Activated CD4-positive, alpha-beta memory T cell treated with anti-CD3 and anti-CD28 coated beads for 36 hours (primary cell): ENCODE measurements at regions of chr11 and their contacts with region 1.

Region 1: GRCh38 chr11:13335319-13335718 is 57.7 kb downstream of the BMAL1 start:
- DNase-seq: peak; percentile 83
- H3K4me3 Mint-ChIP-seq: no peak overlapping the region
- H3K27ac Mint-ChIP-seq: no peak overlapping the region
- H3K4me1 Mint-ChIP-seq: peaks cover 77% of the 10 kb centered on the region
- H3K27me3 Mint-ChIP-seq: no peaks in the 10 kb centered on the region

Region 2: GRCh38 chr11:13183094-13183825 is 152.1 kb before region 1 on chr11:
- CTCF ChIA-PET with region 1: interaction called, 12 read pairs
- POLR2A ChIA-PET with region 1: no interaction called
- intact Hi-C with region 1: loop called (anchors 2 kb)
- DNase-seq: no peak
- H3K4me3 Mint-ChIP-seq: no peak overlapping the region
- H3K27ac Mint-ChIP-seq: no peak overlapping the region
- H3K4me1 Mint-ChIP-seq: peaks cover 7% of the 10 kb centered on the region
- H3K27me3 Mint-ChIP-seq: peaks cover 15% of the 10 kb centered on the region

Region 3: GRCh38 chr11:13249996-13250395 is 85.3 kb before region 1 on chr11:
- CTCF ChIA-PET with region 1: interaction called, 16 read pairs
- POLR2A ChIA-PET with region 1: no interaction called
- intact Hi-C with region 1: no loop called
- DNase-seq: no peak
- H3K4me3 Mint-ChIP-seq: no peak overlapping the region
- H3K27ac Mint-ChIP-seq: no peak overlapping the region
- H3K4me1 Mint-ChIP-seq: no peaks in the 10 kb centered on the region
- H3K27me3 Mint-ChIP-seq: peaks cover 6% of the 10 kb centered on the region

Region 4: GRCh38 chr11:13276832-13277767 is 58.2 kb before region 1 on chr11:
- CTCF ChIA-PET with region 1: interaction called, 52 read pairs
- POLR2A ChIA-PET with region 1: interaction called, 9 read pairs
- intact Hi-C with region 1: loop called (anchors 1 kb)
- DNase-seq: peak; percentile 98
- H3K4me3 Mint-ChIP-seq: peak overlapping the region; percentile 95
- H3K27ac Mint-ChIP-seq: peak overlapping the region; percentile 78
- H3K4me1 Mint-ChIP-seq: peaks cover 44% of the 10 kb centered on the region
- H3K27me3 Mint-ChIP-seq: peaks cover 7% of the 10 kb centered on the region

Region 5: DNA sequence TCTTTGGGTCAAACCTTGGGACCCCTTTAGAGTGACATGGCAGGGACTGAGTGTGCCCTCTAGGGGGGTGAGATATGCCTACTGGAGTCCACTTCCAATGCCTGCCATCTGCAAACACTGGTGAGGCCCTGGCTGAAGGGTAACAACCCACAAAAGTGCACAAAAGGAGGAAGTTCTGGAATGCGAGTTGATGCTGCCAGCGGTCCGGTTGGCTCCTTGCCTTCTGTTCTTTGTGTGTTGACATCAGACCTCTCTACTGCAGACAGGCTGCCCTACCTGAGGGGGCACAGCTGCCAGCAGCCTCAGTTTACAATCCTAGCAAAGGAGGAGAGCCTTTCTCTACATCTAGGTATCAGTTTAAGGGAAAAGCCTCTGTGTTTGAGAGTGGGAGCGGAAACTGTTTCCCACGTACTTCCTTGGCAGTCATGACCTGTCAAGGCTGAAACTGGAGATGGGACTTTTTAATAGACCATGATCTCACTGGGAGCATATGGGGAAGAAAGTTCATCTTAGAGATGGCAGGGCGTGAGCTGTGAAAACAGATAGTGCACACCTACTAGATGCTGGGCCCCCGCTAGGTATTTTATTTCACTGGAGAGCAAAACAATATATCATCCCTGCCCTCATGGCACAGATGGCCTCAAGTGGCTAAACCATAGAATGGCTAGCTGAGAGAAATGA is 30.5 kb before region 1 on chr11:
- CTCF ChIA-PET with region 1: interaction called, 17 read pairs
- POLR2A ChIA-PET with region 1: no interaction called
- intact Hi-C with region 1: no loop called
- DNase-seq: no peak
- H3K4me3 Mint-ChIP-seq: no peak overlapping the region
- H3K27ac Mint-ChIP-seq: no peak overlapping the region
- H3K4me1 Mint-ChIP-seq: peaks cover 20% of the 10 kb centered on the region
- H3K27me3 Mint-ChIP-seq: no peaks in the 10 kb centered on the region

Region 6: GRCh38 chr11:13668102-13668956 is 333.0 kb after region 1 on chr11 and contains the start of gene FAR1:
- CTCF ChIA-PET with region 1: no interaction called
- POLR2A ChIA-PET with region 1: no interaction called
- intact Hi-C with region 1: loop called (anchors 5 kb)
- DNase-seq: peak; percentile 98
- H3K4me3 Mint-ChIP-seq: peak within 1 kb of the TSS; percentile 93
- H3K27ac Mint-ChIP-seq: peak within 1 kb of the TSS; percentile 91
- H3K4me1 Mint-ChIP-seq: peaks cover 40% of the 10 kb centered on the region
- H3K27me3 Mint-ChIP-seq: no peaks in the 10 kb centered on the region
- total RNA-seq, gene FAR1: 39.5 to 41.3 TPM

Region 7: DNA sequence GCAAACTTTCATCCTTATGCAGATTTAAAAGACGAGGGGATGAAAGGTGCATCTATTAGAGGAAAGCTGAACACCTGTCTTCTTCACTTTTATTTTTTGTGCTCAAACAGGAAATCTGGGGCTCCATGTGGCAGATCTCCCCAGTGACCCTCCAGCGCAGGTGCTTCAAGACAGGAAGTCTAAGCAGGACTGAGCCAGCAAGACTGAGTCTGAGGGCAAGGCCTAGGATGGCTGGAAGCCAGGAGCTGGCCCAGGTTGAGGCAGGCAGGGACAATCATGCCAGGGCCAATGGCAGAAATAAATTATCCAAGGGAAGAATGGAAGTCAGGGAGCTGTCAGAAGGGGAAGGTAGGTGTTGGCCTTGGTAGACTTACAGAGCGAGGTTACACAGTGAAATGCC is 526.1 kb after region 1 on chr11:
- CTCF ChIA-PET with region 1: no interaction called
- POLR2A ChIA-PET with region 1: no interaction called
- intact Hi-C with region 1: no loop called
- DNase-seq: no peak
- H3K4me3 Mint-ChIP-seq: no peak overlapping the region
- H3K27ac Mint-ChIP-seq: no peak overlapping the region
- H3K4me1 Mint-ChIP-seq: peaks cover 36% of the 10 kb centered on the region
- H3K27me3 Mint-ChIP-seq: no peaks in the 10 kb centered on the region

Region 8: DNA sequence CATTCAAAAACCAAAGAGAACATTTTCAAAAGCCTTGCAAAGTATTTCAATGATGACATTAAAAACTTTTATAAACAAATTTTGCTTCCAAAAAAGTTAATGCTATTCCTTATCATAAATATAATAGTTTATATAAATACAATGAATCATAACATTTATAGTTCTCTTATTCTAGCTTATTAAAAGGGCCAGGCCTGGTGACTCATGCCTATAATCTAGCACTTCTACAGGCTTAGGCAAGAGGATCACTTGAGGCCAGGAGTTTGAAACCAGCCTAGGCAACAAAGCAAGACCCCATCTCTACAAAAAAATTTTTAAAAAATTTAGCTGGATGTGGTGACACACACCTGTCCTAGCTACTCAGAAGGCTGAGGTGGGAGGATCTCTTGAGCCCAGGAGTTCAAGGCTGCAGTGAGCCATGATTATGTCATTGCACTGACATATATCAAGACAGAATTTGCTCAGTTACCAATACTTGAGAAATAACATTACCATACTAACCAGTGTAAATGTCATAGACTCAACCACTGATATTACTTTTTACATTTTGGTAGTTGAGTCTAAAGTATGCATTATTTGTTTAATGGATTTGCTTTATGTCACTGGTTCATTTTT is 1500.3 kb after region 1 on chr11:
- CTCF ChIA-PET with region 1: no interaction called
- POLR2A ChIA-PET with region 1: no interaction called
- intact Hi-C with region 1: no loop called
- DNase-seq: peak; percentile 29
- H3K4me3 Mint-ChIP-seq: no peak overlapping the region
- H3K27ac Mint-ChIP-seq: no peak overlapping the region
- H3K4me1 Mint-ChIP-seq: no peaks in the 10 kb centered on the region
- H3K27me3 Mint-ChIP-seq: no peaks in the 10 kb centered on the region